OCI-LY7 (cell line): ENCODE measurements at regions of chr11 and their contacts with region 1.

Region 1: GRCh38 chr11:93652161-93652597 is 9.3 kb upstream of the CEP295 start:
- DNase-seq: peak; percentile 43
- H3K4me3 ChIP-seq: no peak overlapping the region
- H3K27ac ChIP-seq: no peak overlapping the region
- H3K4me1 ChIP-seq: no peaks in the 10 kb centered on the region
- CTCF ChIP-seq: peak; percentile 91

Region 2: GRCh38 chr11:92941676-92942571 is 710.3 kb before region 1 on chr11:
- CTCF ChIA-PET with region 1: no interaction called
- POLR2A ChIA-PET with region 1: no interaction called
- intact Hi-C with region 1: loop called (anchors 2 kb)
- DNase-seq: peak; percentile 33
- H3K4me3 ChIP-seq: no peak overlapping the region
- H3K27ac ChIP-seq: no peak overlapping the region
- H3K4me1 ChIP-seq: no peaks in the 10 kb centered on the region
- CTCF ChIP-seq: peak; percentile 83

Region 3: GRCh38 chr11:93234602-93235207 is 417.5 kb before region 1 on chr11:
- CTCF ChIA-PET with region 1: interaction called, 3 read pairs
- POLR2A ChIA-PET with region 1: interaction called, 3 read pairs
- intact Hi-C with region 1: loop called (anchors 1 kb)
- DNase-seq: peak; percentile 80
- H3K4me3 ChIP-seq: no peak overlapping the region
- H3K27ac ChIP-seq: no peak overlapping the region
- H3K4me1 ChIP-seq: no peaks in the 10 kb centered on the region
- CTCF ChIP-seq: peak; percentile 89